ENCODE measurements at regions of chr18 and their contacts with region 1.

Region 1: DNA sequence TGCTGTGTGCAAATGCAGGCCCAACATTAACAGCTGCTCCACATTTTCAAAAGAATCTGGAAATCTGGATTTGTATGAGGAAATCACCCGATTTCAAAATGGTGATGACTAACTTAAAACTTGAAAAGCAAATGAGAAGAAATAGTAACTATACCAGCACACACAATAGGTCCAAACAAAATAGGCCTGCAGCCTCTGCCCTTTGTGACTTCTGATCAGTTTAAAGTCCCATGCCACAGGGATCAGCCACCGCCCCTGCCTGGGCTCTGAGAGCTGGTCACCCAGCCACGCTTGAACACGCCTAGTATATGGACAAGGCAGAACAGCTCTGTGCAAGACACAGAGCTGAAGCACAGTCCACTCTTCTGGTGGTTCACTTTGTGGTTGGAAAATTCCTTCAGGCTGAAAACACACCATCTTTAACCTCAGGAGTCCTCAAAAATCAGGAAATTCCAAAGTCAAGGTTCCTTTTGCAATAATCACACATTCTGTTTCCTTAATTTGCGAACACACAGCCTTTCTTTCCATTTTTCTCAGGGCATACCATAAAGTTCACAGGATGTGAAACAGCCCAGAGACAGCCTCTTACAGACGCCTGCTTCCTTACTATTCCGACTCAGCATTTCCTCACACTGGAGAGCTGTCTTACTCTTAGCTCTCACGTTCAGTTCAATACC is 150.1 kb upstream of the RIOK3 start:
- DNase-seq: no peak
- H3K4me3 ChIP-seq: no peak overlapping the region
- H3K27ac ChIP-seq: no peak overlapping the region
- H3K4me1 ChIP-seq: peaks cover 0 to 6% (median 3%) of the 10 kb centered on the region in 4 donors
- H3K27me3 ChIP-seq: no peaks in the 10 kb centered on the region
- CTCF ChIP-seq: no peak
- EP300 ChIP-seq: no peak
- POLR2A ChIP-seq: no peak

Region 2: GRCh38 chr18:23250893-23251656 is 51.9 kb before region 1 on chr18:
- intact Hi-C with region 1: loop called (anchors 5 kb)
- DNase-seq: no peak
- H3K4me3 ChIP-seq: no peak overlapping the region
- H3K27ac ChIP-seq: no peak overlapping the region
- H3K4me1 ChIP-seq: no peaks in the 10 kb centered on the region
- H3K27me3 ChIP-seq: no peaks in the 10 kb centered on the region
- CTCF ChIP-seq: no peak
- EP300 ChIP-seq: no peak
- POLR2A ChIP-seq: no peak

Measured in esophagus muscularis mucosa (tissue), 4 donors.